Activated CD8-positive, alpha-beta T cell treated with anti-CD3 and anti-CD28 coated beads, Interleukin-2, amount 10 ng/mL, durations not matched to agents 7 days and 5 days (primary cell): ENCODE measurements at regions of chr5 and their contacts with region 1.

Region 1: DNA sequence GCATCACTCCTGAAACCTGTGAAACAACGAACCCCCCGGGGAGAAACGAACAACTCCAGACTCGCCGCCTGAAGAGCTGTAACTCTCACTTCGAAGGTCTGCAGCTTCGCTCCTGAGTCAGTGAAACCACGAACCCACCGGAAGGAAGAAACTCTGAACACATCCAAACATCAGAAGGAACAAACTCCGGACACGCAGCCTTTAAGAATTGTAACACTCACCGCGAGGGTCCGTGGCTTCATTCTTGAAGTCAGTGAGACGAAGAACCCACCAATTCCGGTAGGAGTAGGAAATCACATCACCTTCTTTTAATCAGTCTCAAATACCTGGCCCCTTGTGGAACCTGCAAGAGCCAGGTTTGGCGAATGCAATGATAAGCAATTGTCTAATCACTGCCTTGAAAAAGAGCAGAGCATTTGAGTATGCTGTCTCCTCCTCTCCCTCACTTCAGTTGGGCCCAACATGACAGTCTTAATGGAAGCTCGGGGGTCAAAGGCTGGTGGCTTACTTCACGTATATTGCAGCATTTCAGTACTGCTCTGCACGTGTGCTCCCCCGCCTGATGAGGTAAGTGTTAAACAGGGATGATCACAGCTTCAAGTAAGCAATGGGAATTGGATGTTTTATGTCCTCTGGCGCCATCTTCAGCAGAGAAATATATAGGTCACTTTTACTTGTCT is 473 bp downstream of the IRGM start:
- DNase-seq: peak; percentile 83
- ATAC-seq: peak; percentile 94
- H3K4me3 Mint-ChIP-seq: peak overlapping the region; percentile 75
- H3K27ac Mint-ChIP-seq: peak overlapping the region; percentile 95
- H3K4me1 Mint-ChIP-seq: peaks cover 39% of the 10 kb centered on the region
- H3K27me3 Mint-ChIP-seq: peaks cover 3% of the 10 kb centered on the region

Region 2: GRCh38 chr5:150560401-150561193 is 286.2 kb before region 1 on chr5:
- CTCF ChIA-PET with region 1: interaction called, 42 read pairs
- POLR2A ChIA-PET with region 1: no interaction called
- DNase-seq: peak; percentile 91
- ATAC-seq: peak; percentile 94
- H3K4me3 Mint-ChIP-seq: no peak overlapping the region
- H3K27ac Mint-ChIP-seq: no peak overlapping the region
- H3K4me1 Mint-ChIP-seq: peaks cover 4% of the 10 kb centered on the region
- H3K27me3 Mint-ChIP-seq: peaks cover 2% of the 10 kb centered on the region

Region 3: GRCh38 chr5:150734579-150735384 is 112.0 kb before region 1 on chr5:
- CTCF ChIA-PET with region 1: interaction called, 16 read pairs
- POLR2A ChIA-PET with region 1: no interaction called
- DNase-seq: no peak
- ATAC-seq: no peak
- H3K4me3 Mint-ChIP-seq: no peak overlapping the region
- H3K27ac Mint-ChIP-seq: peak overlapping the region; percentile 19
- H3K4me1 Mint-ChIP-seq: peaks cover 50% of the 10 kb centered on the region
- H3K27me3 Mint-ChIP-seq: no peaks in the 10 kb centered on the region

Region 4: GRCh38 chr5:150778517-150779396 is 68.0 kb before region 1 on chr5 and contains the start of gene SMIM3:
- CTCF ChIA-PET with region 1: interaction called, 72 read pairs
- POLR2A ChIA-PET with region 1: interaction called, 52 read pairs
- DNase-seq: peak; percentile 79
- ATAC-seq: peak; percentile 71
- H3K4me3 Mint-ChIP-seq: peak within 1 kb of the TSS; percentile 97
- H3K27ac Mint-ChIP-seq: peak within 1 kb of the TSS; percentile 90
- H3K4me1 Mint-ChIP-seq: peaks cover 67% of the 10 kb centered on the region
- H3K27me3 Mint-ChIP-seq: no peaks in the 10 kb centered on the region
- total RNA-seq, gene SMIM3: 16.4 to 16.7 TPM

Region 5: DNA sequence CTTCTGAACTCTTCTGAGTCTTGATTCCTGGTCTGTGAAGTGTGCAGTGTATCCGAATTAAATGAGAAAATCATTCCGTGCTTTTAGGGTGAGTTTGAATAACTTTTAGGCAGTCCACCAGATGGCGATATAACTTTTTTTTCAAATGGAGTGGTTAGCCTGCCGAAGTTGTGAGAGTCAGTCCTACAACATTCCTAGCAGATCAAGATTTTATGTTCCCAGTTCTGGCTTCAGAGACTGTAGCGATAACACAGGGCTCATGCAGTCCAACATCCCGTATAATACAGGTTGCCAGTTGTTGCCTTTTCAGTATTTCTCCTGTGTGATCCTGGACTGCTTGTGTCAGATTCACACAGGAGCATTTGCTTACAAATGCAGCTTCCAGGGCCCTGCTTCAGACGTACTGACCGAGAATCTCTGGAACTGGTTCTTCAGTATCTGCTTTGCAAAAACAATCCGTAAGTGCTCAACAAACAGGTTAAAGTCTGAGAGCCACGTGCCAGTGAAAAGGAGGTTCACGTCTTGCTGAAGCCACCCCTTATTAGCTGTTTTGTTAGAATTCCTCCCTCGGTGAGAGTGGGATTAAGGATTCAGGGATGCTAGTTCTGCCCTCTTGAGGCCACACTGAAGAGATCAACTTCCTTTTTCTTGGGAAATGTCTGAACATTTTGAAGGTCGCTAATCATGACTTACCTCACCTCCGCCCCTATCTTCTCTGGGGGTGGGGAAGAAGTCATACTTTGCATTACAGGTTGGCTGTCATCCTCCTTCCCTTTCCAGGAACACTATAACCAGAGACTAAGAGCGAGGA is 45.5 kb before region 1 on chr5:
- CTCF ChIA-PET with region 1: interaction called, 62 read pairs
- POLR2A ChIA-PET with region 1: interaction called, 12 read pairs
- DNase-seq: no peak
- ATAC-seq: peak; percentile 53
- H3K4me3 Mint-ChIP-seq: no peak overlapping the region
- H3K27ac Mint-ChIP-seq: no peak overlapping the region
- H3K4me1 Mint-ChIP-seq: peaks cover 9% of the 10 kb centered on the region
- H3K27me3 Mint-ChIP-seq: peaks cover 3% of the 10 kb centered on the region

Region 6: GRCh38 chr5:150901446-150901845 is 54.7 kb after region 1 on chr5:
- CTCF ChIA-PET with region 1: no interaction called
- POLR2A ChIA-PET with region 1: no interaction called
- DNase-seq: no peak
- ATAC-seq: no peak
- H3K4me3 Mint-ChIP-seq: no peak overlapping the region
- H3K27ac Mint-ChIP-seq: no peak overlapping the region
- H3K4me1 Mint-ChIP-seq: peaks cover 5% of the 10 kb centered on the region
- H3K27me3 Mint-ChIP-seq: peaks cover 4% of the 10 kb centered on the region

Region 7: DNA sequence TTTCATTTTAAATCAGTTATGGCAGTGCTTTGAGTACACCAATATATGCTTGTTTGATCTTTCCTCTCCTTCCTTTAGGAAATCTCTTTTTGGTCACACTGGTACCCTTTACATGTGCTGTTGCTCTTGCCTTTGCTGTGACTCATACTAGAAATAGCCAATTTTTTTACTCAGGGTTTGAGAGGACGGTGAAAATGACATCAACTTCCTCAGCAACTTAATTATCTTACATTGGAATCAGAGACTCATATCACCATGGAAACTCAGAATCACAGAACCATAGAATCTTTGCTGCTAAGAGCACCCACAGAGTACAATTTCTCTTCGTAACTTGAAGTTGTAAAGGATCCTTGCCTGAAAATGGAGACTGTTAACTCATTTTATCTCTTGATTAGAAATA is 71.8 kb after region 1 on chr5:
- CTCF ChIA-PET with region 1: no interaction called
- POLR2A ChIA-PET with region 1: no interaction called
- DNase-seq: no peak
- ATAC-seq: no peak
- H3K4me3 Mint-ChIP-seq: no peak overlapping the region
- H3K27ac Mint-ChIP-seq: no peak overlapping the region
- H3K4me1 Mint-ChIP-seq: no peaks in the 10 kb centered on the region
- H3K27me3 Mint-ChIP-seq: no peaks in the 10 kb centered on the region